Activated naive CD4-positive, alpha-beta T cell treated with anti-CD3 and anti-CD28 coated beads for 36 hours (primary cell): ENCODE measurements at regions of chr6 and their contacts with region 1.

Region 1: GRCh38 chr6:42547407-42548329 is 16.2 kb upstream of the UBR2 start:
- DNase-seq: peak; percentile 92
- H3K4me3 Mint-ChIP-seq: peak overlapping the region; percentile 70
- H3K27ac Mint-ChIP-seq: no peak overlapping the region
- H3K4me1 Mint-ChIP-seq: peaks cover 14% of the 10 kb centered on the region
- H3K27me3 Mint-ChIP-seq: peaks cover 2% of the 10 kb centered on the region

Region 2: DNA sequence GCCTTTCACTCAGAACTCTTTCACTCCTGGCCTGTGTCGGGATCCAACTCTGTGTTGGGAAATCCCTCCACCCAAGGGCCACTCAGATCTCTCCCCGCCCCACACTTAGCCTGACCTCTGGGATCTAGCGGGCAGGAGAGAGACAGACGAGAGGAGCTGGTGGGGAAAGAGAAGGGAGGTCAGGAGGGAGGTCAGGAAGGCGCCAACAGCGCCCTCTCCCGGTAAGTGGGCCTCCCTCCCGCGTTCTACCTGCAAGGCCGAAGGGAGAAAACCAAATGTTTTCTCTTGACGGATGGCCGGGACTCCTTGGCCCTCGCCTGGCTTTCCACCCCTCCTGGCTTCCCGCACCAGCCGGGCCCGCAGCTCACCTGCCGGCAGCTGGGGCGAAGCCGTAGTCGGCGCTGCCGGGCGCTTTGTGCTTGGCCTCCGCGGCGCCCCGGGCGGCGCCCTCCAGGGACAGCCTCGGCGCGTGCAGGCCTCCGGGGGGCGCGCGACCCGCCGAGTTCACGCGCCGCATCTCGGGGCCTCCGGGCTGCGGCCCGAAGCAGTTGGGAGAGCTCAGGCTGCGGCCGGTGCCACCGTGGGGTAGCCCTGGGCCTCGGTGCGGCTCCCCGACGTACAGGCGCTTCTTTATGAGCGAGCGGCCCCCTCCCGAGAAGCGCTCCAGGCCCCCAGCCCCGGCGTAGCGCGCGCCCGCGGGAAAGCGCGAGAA is 443.4 kb before region 1 on chr6:
- CTCF ChIA-PET with region 1: interaction called, 9 read pairs
- intact Hi-C with region 1: loop called (anchors 1 kb)
- DNase-seq: peak; percentile 87
- H3K4me3 Mint-ChIP-seq: peak overlapping the region; percentile 65
- H3K27ac Mint-ChIP-seq: no peak overlapping the region
- H3K4me1 Mint-ChIP-seq: peaks cover 21% of the 10 kb centered on the region
- H3K27me3 Mint-ChIP-seq: no peaks in the 10 kb centered on the region

Region 3: GRCh38 chr6:42236682-42237473 is 310.8 kb before region 1 on chr6:
- CTCF ChIA-PET with region 1: interaction called, 11 read pairs
- intact Hi-C with region 1: no loop called
- DNase-seq: peak; percentile 56
- H3K4me3 Mint-ChIP-seq: no peak overlapping the region
- H3K27ac Mint-ChIP-seq: peak overlapping the region; percentile 76
- H3K4me1 Mint-ChIP-seq: peaks cover 13% of the 10 kb centered on the region
- H3K27me3 Mint-ChIP-seq: no peaks in the 10 kb centered on the region

Region 4: GRCh38 chr6:42315991-42316378 is 231.7 kb before region 1 on chr6:
- CTCF ChIA-PET with region 1: interaction called, 18 read pairs
- intact Hi-C with region 1: no loop called
- DNase-seq: no peak
- H3K4me3 Mint-ChIP-seq: no peak overlapping the region
- H3K27ac Mint-ChIP-seq: no peak overlapping the region
- H3K4me1 Mint-ChIP-seq: peaks cover 51% of the 10 kb centered on the region
- H3K27me3 Mint-ChIP-seq: no peaks in the 10 kb centered on the region

Region 5: DNA sequence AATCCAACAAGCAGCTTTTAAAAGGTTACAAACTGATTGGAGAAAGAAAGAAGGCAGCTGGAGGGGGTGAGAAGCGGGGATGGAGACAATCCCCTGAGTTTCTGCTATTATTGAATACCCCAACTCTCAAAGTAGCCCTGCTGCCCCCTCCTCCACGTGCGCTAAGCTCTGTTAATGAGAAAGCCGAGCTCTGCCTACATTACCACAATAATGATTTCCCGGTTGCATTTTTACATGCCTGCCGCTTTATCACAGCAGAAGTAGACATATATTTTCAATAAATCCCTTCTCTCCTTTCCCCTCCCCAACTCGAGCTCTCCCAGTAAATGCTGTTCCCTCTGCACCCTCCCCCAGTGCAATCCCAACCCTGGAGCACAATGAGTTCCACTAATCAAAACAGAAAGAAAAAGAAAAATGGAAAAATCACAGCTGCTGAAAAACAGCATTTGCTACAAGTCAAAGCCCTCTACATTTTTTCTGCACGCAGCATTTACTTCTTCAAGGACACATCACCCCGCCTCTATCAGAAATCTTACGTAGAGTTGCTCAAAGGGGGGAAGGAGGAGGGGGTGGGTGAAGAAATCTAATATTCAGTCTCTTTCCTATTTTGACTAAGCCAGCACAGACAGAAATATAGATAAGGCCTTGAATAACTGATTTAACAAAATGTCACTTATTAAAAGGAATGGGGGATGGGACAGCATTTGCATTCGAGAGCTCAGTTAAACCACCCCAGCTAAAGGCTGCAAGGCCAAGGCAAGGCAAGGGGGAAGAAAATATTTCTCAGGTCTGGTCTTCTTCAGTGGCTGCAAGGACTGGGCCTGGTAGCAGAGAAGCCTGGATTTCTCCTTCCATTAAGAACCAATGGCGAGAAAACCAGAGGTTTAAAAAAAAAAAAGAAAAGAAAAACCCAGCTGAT is 106.6 kb before region 1 on chr6:
- CTCF ChIA-PET with region 1: interaction called, 10 read pairs
- intact Hi-C with region 1: no loop called
- DNase-seq: no peak
- H3K4me3 Mint-ChIP-seq: no peak overlapping the region
- H3K27ac Mint-ChIP-seq: no peak overlapping the region
- H3K4me1 Mint-ChIP-seq: peaks cover 52% of the 10 kb centered on the region
- H3K27me3 Mint-ChIP-seq: no peaks in the 10 kb centered on the region

Region 6: DNA sequence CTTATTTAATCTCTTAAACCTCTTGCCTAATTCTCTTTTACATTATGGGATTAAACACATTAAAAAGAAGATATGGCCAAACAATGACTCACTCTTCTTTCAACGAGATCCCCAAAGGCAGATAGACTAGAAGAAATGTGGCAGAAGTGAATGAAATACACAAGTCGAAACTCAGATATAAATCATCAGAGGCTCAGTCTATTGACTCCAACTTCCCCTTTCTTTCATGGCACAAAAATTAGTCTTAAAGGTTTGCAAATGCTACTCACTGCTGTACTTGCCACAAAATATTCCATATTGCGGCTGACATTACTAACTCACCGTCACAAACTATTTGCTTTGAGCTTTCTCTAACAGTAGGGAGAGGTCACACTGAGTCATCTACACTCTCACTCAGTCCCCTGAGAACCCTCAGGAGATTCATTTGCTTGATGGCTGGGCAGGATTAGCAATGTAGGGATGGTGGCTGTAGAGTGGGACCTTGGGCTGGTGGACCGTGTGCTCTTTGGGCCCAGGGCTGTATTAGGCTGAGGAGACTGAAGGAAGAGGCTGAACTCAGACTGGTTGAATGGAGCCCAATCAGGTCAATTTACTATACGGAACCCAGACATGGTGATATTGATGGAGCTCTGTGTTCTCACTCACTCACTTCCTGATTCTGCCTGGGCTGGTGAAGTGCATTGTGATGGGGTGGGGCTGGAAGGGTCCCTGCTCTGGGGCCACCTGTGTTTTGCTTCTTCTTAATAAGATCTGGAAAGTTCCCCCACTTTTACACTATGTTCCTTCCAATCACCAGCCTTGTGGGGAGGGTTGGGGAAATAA is 26.7 kb before region 1 on chr6:
- CTCF ChIA-PET with region 1: interaction called, 14 read pairs
- intact Hi-C with region 1: no loop called
- DNase-seq: peak; percentile 56
- H3K4me3 Mint-ChIP-seq: no peak overlapping the region
- H3K27ac Mint-ChIP-seq: peak overlapping the region; percentile 38
- H3K4me1 Mint-ChIP-seq: peaks cover 18% of the 10 kb centered on the region
- H3K27me3 Mint-ChIP-seq: no peaks in the 10 kb centered on the region

Region 7: GRCh38 chr6:42563697-42564505 is 16.2 kb after region 1 on chr6 and contains the start of gene UBR2:
- CTCF ChIA-PET with region 1: interaction called, 23 read pairs
- intact Hi-C with region 1: no loop called
- DNase-seq: peak; percentile 98
- H3K4me3 Mint-ChIP-seq: peak within 1 kb of the TSS; percentile 97
- H3K27ac Mint-ChIP-seq: peak within 1 kb of the TSS; percentile 92
- H3K4me1 Mint-ChIP-seq: peaks cover 26% of the 10 kb centered on the region
- H3K27me3 Mint-ChIP-seq: no peaks in the 10 kb centered on the region
- total RNA-seq, gene UBR2: 23.1 to 23.5 TPM

Region 8: GRCh38 chr6:43817192-43817591 is 1269.5 kb after region 1 on chr6:
- CTCF ChIA-PET with region 1: no interaction called
- intact Hi-C with region 1: no loop called
- DNase-seq: peak; percentile 42
- H3K4me3 Mint-ChIP-seq: no peak overlapping the region
- H3K27ac Mint-ChIP-seq: no peak overlapping the region
- H3K4me1 Mint-ChIP-seq: peaks cover 7% of the 10 kb centered on the region
- H3K27me3 Mint-ChIP-seq: no peaks in the 10 kb centered on the region